Activated naive CD4-positive, alpha-beta T cell treated with anti-CD3 and anti-CD28 coated beads, Interleukin-2, amount 10 ng/mL, durations not matched to agents 7 days and 5 days (primary cell): ENCODE measurements at regions of chr12 and their contacts with region 1.

Region 1: DNA sequence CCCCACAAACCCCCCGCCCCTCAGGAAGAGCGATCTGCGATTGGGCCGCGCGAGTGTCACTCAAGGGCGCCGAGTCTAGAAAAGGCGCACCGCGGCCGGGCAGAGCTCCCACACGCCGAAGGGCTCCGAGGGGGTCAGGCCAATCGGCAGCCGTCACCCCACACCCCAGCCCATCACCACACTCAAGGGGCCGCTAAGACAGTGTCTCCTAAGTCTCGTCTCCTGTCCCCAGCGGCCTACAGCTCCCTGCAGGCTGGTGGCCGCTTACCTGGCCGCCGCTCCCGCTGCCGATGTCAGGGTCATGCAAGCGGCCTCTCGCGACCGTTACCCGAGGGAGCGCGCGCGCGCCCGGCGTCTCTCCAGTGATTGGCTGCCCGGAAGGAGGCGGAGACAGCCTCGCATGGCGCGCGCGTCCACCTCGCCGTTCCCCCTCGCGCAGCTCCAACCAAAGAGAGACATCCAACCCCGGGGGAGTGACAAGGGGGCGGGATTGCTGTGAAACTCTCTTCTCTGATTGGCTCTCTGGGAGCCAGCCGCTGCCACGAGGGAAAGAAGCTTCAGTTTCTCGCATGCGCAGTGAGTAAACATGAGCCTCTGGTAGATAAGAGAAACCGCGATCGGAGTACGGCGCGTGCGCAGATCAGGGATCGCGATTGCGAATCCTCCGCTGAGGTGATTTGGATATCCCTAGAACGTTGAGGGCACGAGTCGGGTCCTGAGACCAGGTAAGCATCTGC is at the starts of genes MPHOSPH9 and MTRFR:
- DNase-seq: peak; percentile 99
- H3K4me3 Mint-ChIP-seq: peak within 1 kb of the TSS; percentile 96
- H3K27ac Mint-ChIP-seq: peak within 1 kb of the TSS; percentile 99
- H3K4me1 Mint-ChIP-seq: peaks cover 80% of the 10 kb centered on the region
- H3K27me3 Mint-ChIP-seq: peaks cover 6% of the 10 kb centered on the region

Region 2: GRCh38 chr12:122860346-122861090 is 372.5 kb before region 1 on chr12:
- CTCF ChIA-PET with region 1: interaction called, 16 read pairs
- DNase-seq: peak; percentile 87
- H3K4me3 Mint-ChIP-seq: no peak overlapping the region
- H3K27ac Mint-ChIP-seq: peak overlapping the region; percentile 76
- H3K4me1 Mint-ChIP-seq: peaks cover 6% of the 10 kb centered on the region
- H3K27me3 Mint-ChIP-seq: no peaks in the 10 kb centered on the region

Region 3: DNA sequence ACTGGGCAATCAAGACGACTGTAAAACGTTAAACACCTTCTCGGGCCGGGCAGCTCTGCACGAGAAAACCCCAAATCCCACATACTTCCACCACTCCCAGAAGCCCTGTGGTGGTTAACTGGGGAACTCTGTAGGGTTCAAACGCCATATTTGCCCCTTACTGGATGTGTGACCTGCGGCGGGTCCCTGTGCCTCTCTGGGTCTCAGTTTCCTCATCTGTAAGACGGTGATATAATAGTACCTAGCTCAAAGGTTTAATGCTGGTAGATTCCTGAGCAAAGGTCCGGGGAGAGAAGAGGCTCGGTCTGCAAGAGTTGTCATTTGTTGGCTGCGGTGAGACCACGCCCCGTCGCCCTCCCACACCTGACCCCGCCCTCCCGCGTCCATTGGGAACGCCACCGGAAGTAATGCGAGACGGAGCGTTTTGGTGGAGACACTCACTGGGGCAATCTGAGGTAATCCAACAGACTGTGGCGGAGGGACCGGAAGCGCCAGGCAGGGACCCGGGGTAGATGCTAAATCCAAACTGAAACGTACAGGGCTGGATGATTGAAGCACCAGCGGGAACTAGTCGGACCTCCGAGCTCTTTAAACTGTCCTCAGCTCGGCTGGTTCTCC is 258.6 kb before region 1 on chr12:
- CTCF ChIA-PET with region 1: interaction called, 10 read pairs
- DNase-seq: peak; percentile 99
- H3K4me3 Mint-ChIP-seq: peak overlapping the region; percentile 98
- H3K27ac Mint-ChIP-seq: peak overlapping the region; percentile 100
- H3K4me1 Mint-ChIP-seq: peaks cover 41% of the 10 kb centered on the region
- H3K27me3 Mint-ChIP-seq: peaks cover 7% of the 10 kb centered on the region

Region 4: GRCh38 chr12:123043536-123044001 is 189.4 kb before region 1 on chr12:
- CTCF ChIA-PET with region 1: interaction called, 42 read pairs
- DNase-seq: peak; percentile 86
- H3K4me3 Mint-ChIP-seq: no peak overlapping the region
- H3K27ac Mint-ChIP-seq: peak overlapping the region; percentile 45
- H3K4me1 Mint-ChIP-seq: peaks cover 30% of the 10 kb centered on the region
- H3K27me3 Mint-ChIP-seq: no peaks in the 10 kb centered on the region

Region 5: GRCh38 chr12:123200414-123200813 is 32.6 kb before region 1 on chr12:
- CTCF ChIA-PET with region 1: interaction called, 14 read pairs
- DNase-seq: no peak
- H3K4me3 Mint-ChIP-seq: no peak overlapping the region
- H3K27ac Mint-ChIP-seq: peak overlapping the region; percentile 79
- H3K4me1 Mint-ChIP-seq: peaks cover 19% of the 10 kb centered on the region
- H3K27me3 Mint-ChIP-seq: no peaks in the 10 kb centered on the region

Region 6: GRCh38 chr12:123250484-123251383 is 17.8 kb after region 1 on chr12:
- CTCF ChIA-PET with region 1: interaction called, 15 read pairs
- DNase-seq: peak; percentile 5
- H3K4me3 Mint-ChIP-seq: no peak overlapping the region
- H3K27ac Mint-ChIP-seq: peak overlapping the region; percentile 68
- H3K4me1 Mint-ChIP-seq: peaks cover 30% of the 10 kb centered on the region
- H3K27me3 Mint-ChIP-seq: no peaks in the 10 kb centered on the region

Region 7: DNA sequence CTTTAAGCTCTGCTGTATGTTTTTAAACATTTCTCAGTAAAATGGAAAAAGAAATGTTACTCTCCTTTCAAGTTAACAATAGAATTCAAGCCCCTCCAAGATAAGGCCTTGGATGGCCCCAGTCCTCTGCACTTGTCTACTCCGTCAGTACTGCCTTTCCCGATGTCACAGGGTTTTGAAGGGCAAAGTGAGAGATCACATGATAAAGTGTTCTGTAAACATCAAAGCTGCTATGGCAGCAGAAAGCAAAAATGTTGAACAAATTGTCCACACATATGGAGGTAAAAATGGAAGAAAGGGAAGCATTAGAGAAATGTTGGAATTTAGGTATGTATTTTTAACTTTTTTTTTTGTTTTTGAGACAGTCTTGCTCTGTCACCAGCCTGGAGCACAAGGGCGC is 72.2 kb after region 1 on chr12:
- CTCF ChIA-PET with region 1: no interaction called
- DNase-seq: no peak
- H3K4me3 Mint-ChIP-seq: no peak overlapping the region
- H3K27ac Mint-ChIP-seq: no peak overlapping the region
- H3K4me1 Mint-ChIP-seq: no peaks in the 10 kb centered on the region
- H3K27me3 Mint-ChIP-seq: no peaks in the 10 kb centered on the region

Region 8: GRCh38 chr12:123457980-123458783 is 225.2 kb after region 1 on chr12 and contains the start of gene SNRNP35:
- CTCF ChIA-PET with region 1: no interaction called
- DNase-seq: peak; percentile 89
- H3K4me3 Mint-ChIP-seq: peak within 1 kb of the TSS; percentile 97
- H3K27ac Mint-ChIP-seq: peak within 1 kb of the TSS; percentile 100
- H3K4me1 Mint-ChIP-seq: peaks cover 27% of the 10 kb centered on the region
- H3K27me3 Mint-ChIP-seq: no peaks in the 10 kb centered on the region